Activated CD8-positive, alpha-beta T cell treated with anti-CD3 and anti-CD28 coated beads, Interleukin-2, amount 10 ng/mL, durations not matched to agents 7 days and 5 days (primary cell): ENCODE measurements at regions of chr12 and their contacts with region 1.

Region 1: DNA sequence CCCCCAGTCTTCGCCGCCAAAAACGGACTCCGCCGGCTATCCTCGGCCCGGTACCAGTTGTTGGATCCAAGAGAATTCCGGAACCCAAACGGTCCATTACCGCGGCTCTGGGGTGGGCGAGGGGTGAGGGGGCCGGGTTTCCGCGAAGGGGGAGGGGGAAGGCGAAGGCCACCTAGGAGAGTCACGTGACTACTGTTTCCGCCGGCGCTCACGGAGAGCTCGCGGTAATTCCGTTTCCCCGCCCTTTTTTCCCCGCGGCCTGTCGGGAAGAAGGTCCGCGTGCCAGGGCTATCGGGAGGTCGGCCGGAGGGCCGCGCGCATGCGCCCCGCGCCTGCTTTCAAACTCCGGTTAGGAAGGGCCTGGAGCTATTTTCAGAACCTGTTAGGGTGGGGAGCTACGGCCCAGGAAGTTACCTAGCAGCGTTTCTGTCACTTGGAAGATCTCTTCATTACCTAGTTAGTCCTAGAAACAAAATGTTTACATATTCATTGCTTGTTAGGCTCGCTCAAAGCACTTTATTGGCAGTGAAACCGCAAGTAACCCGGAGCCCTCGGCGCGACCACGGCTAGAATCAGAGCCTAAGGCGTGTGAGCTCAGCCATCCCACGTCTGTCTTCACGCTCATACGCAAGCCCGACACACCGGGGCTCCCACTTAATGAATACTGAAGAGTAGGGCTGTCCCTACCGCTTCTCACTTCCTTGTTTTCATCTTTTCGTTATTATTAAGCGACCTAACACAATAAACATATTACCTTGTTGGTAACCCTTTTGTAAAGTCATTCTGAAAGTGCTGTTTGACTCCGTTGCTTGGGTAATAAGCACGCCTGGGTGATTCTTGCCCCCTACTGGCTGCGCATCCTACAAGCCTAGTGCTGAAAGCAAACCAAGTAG is 624 bp upstream of the SBNO1 start:
- DNase-seq: peak; percentile 99
- ATAC-seq: peak; percentile 77
- H3K4me3 Mint-ChIP-seq: peak overlapping the region; percentile 88
- H3K27ac Mint-ChIP-seq: peak overlapping the region; percentile 94
- H3K4me1 Mint-ChIP-seq: peaks cover 12% of the 10 kb centered on the region
- H3K27me3 Mint-ChIP-seq: no peaks in the 10 kb centered on the region

Region 2: DNA sequence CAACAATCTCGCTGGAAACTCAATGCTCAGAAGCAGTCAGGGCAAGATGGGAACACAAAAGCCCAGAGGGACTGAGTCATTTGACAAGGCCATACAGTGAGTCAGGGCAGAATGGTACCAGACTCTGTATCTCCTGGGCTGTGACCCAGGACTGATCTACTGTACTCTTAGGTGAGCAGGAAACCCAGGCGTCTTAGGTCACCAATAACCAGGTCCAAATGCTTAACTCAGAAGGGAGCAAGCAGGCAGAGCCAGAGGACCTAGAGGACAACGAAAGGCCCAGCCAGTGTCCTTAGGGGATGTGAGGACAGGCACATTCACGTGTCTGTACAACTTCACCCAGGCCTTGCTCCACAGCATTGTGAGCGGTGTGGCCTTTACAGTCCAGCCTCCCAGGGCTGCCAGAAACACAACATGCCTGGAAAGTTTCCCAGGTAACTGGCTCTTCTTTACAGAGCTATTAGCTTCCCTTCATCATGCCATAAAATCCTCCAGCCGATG is 314.9 kb before region 1 on chr12:
- CTCF ChIA-PET with region 1: no interaction called
- POLR2A ChIA-PET with region 1: no interaction called
- DNase-seq: no peak
- ATAC-seq: peak; percentile 34
- H3K4me3 Mint-ChIP-seq: no peak overlapping the region
- H3K27ac Mint-ChIP-seq: no peak overlapping the region
- H3K4me1 Mint-ChIP-seq: peaks cover 26% of the 10 kb centered on the region
- H3K27me3 Mint-ChIP-seq: no peaks in the 10 kb centered on the region

Region 3: DNA sequence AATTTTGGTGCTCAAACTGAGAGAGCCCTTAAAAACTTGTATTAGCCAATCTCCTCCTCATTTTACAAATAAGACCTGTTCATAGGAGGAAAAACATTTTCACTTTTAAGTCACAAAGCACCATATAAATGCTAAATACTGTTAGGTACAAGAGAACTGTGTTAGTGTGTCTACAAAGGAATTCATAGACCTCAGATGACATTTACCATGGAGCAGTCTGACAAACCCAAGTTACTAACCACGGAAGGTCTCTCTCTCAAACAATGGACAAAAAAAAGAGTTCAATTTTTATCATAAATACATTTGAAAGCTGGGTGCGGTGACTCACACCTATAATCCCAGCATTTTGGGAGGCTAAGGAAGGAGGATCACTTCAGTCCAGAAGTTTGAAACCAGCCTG is 10.7 kb before region 1 on chr12:
- CTCF ChIA-PET with region 1: interaction called, 9 read pairs
- POLR2A ChIA-PET with region 1: interaction called, 10 read pairs
- DNase-seq: no peak
- ATAC-seq: no peak
- H3K4me3 Mint-ChIP-seq: no peak overlapping the region
- H3K27ac Mint-ChIP-seq: peak overlapping the region; percentile 11
- H3K4me1 Mint-ChIP-seq: peaks cover 46% of the 10 kb centered on the region
- H3K27me3 Mint-ChIP-seq: no peaks in the 10 kb centered on the region

Region 4: DNA sequence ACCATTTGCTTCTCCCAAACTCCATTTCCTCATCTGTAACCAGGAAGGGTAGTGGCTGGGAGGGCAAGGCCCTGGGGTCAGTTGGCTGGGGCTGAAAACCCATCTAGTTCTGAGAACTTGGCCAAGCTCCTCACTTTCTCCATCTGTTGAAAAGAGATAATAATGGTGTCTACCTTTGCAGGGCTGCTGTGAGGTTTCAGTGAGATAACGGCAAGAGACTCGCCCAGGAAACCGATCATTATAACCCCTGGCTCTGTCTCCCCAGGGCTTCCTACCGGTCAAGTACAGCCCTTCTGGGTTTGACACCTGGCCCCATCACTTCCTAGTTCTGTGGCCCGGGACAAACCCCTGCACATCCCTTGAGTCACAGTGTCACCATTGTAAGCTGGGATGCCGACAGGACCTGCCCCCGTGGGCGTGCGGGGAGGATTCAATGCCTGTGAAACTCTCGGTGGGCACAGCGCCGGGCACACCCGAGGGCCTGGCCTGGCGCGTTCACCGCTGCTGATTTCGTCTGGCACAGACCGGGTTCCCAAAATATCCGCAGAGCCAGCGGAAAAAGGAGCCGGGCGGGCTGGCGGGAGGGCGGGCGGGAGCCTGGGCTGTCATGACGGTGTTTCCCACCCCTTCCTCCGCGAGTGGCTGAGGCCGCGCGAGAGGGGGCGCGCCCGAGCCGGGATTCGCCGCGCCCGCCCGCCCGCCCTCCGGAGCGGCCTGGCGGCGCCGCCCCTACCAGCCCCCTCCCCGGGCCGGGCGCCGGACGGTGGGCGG is 23.1 kb after region 1 on chr12:
- CTCF ChIA-PET with region 1: interaction called, 41 read pairs
- POLR2A ChIA-PET with region 1: interaction called, 41 read pairs
- DNase-seq: peak; percentile 77
- ATAC-seq: peak; percentile 64
- H3K4me3 Mint-ChIP-seq: peak overlapping the region; percentile 86
- H3K27ac Mint-ChIP-seq: peak overlapping the region; percentile 93
- H3K4me1 Mint-ChIP-seq: peaks cover 54% of the 10 kb centered on the region
- H3K27me3 Mint-ChIP-seq: no peaks in the 10 kb centered on the region

Region 5: GRCh38 chr12:123457980-123458783 is 92.9 kb after region 1 on chr12 and contains the start of gene SNRNP35:
- CTCF ChIA-PET with region 1: interaction called, 10 read pairs
- POLR2A ChIA-PET with region 1: no interaction called
- DNase-seq: peak; percentile 88
- ATAC-seq: peak; percentile 78
- H3K4me3 Mint-ChIP-seq: peak within 1 kb of the TSS; percentile 92
- H3K27ac Mint-ChIP-seq: peak within 1 kb of the TSS; percentile 99
- H3K4me1 Mint-ChIP-seq: peaks cover 25% of the 10 kb centered on the region
- H3K27me3 Mint-ChIP-seq: no peaks in the 10 kb centered on the region
- total RNA-seq, gene SNRNP35: 22.9 to 24.1 TPM

Region 6: GRCh38 chr12:123488539-123489230 is 123.4 kb after region 1 on chr12:
- CTCF ChIA-PET with region 1: no interaction called
- POLR2A ChIA-PET with region 1: no interaction called
- DNase-seq: no peak
- ATAC-seq: no peak
- H3K4me3 Mint-ChIP-seq: no peak overlapping the region
- H3K27ac Mint-ChIP-seq: no peak overlapping the region
- H3K4me1 Mint-ChIP-seq: peaks cover 14% of the 10 kb centered on the region
- H3K27me3 Mint-ChIP-seq: no peaks in the 10 kb centered on the region

Region 7: DNA sequence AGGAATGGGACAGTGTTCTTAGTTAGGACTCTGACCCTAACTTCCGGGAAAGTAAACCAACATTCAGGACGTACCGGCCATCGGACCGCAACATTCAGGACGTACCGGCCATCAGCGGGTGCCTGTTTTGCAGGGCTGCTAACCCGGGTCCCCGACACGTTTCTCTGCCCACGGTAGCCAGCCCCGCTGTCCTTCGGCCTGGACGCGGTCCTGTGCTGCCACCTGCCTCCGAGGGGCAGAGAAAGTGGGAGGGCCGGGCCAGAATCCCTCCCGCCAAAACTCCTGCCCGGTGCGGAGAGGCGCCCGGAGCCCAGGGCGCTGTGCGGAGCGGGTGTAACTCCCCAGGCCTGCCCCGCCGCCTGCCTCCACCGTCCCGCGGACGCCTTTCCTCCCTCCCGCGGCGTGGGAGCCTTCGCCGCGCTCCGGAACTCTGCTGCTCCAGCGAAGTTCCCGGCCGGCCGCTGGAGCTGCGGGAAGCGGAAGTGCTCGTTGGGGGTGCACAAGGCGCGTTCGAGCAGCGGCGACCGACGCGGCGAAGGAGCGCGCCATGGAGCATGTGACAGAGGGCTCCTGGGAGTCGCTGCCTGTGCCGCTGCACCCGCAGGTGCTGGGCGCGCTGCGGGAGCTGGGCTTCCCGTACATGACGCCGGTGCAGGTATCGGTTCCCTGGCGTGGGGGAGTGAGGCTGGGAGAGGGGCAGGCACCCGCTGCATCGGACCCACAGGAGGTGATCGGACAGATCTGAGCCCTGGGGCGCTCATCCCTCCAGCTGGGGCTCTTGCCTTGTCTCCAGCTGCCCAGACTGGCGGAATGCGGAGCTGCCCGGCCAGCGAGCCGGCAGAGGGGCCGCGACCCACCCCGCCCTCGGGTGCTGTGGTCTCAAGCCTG is 236.6 kb after region 1 on chr12 and contains the start of gene DDX55:
- CTCF ChIA-PET with region 1: no interaction called
- POLR2A ChIA-PET with region 1: interaction called, 15 read pairs
- DNase-seq: peak; percentile 89
- ATAC-seq: peak; percentile 95
- H3K4me3 Mint-ChIP-seq: peak within 1 kb of the TSS; percentile 90
- H3K27ac Mint-ChIP-seq: peak within 1 kb of the TSS; percentile 98
- H3K4me1 Mint-ChIP-seq: peaks cover 39% of the 10 kb centered on the region
- H3K27me3 Mint-ChIP-seq: no peaks in the 10 kb centered on the region
- total RNA-seq, gene DDX55: 44.7 to 44.8 TPM

Region 8: GRCh38 chr12:123787466-123787865 is 422.2 kb after region 1 on chr12:
- CTCF ChIA-PET with region 1: no interaction called
- POLR2A ChIA-PET with region 1: no interaction called
- DNase-seq: no peak
- ATAC-seq: no peak
- H3K4me3 Mint-ChIP-seq: no peak overlapping the region
- H3K27ac Mint-ChIP-seq: no peak overlapping the region
- H3K4me1 Mint-ChIP-seq: no peaks in the 10 kb centered on the region
- H3K27me3 Mint-ChIP-seq: peaks cover 3% of the 10 kb centered on the region